ENCODE measurements at regions of chr11 and their contacts with region 1.

Region 1: GRCh38 chr11:129279326-129280026 is 87.4 kb upstream of the ARHGAP32 start:
- DNase-seq: peak; percentile 95
- H3K4me3 Mint-ChIP-seq: peak overlapping the region; percentile 77
- H3K27ac Mint-ChIP-seq: peak overlapping the region; percentile 86
- H3K4me1 Mint-ChIP-seq: peaks cover 36% of the 10 kb centered on the region
- H3K27me3 Mint-ChIP-seq: peaks cover 33% of the 10 kb centered on the region

Region 2: GRCh38 chr11:129163714-129164164 is 115.7 kb before region 1 on chr11:
- intact Hi-C with region 1: loop called (anchors 5 kb)
- DNase-seq: no peak
- H3K4me3 Mint-ChIP-seq: no peak overlapping the region
- H3K27ac Mint-ChIP-seq: no peak overlapping the region
- H3K4me1 Mint-ChIP-seq: peaks cover 12% of the 10 kb centered on the region
- H3K27me3 Mint-ChIP-seq: peaks cover 9% of the 10 kb centered on the region

Region 3: GRCh38 chr11:129611661-129612446 is 332.4 kb after region 1 on chr11:
- intact Hi-C with region 1: no loop called
- DNase-seq: no peak
- H3K4me3 Mint-ChIP-seq: no peak overlapping the region
- H3K27ac Mint-ChIP-seq: no peak overlapping the region
- H3K4me1 Mint-ChIP-seq: no peaks in the 10 kb centered on the region
- H3K27me3 Mint-ChIP-seq: no peaks in the 10 kb centered on the region